A673 (cell line): ENCODE measurements at regions of chr5 and their contacts with region 1.

Region 1: DNA sequence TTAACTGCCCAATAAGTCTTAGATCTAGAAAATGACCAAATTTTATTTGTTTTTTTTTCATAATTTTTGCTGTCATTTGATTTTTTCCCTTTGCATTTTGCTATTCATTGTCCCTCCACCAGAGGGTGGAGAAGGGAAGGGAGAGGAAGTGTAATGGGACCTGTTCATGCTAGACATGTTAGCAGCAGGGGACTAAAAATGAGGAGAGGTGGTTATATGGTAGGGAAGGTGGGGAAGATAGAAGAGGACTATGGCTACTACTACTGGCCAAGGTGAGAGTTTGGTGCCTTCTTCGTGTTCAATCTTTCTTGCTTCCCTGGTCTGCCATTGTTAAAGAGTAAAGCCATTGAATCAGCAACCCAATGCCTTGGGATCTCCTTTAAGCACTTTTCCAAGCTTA is 6.4 kb downstream of the GRIA1 start:
- DNase-seq: peak; percentile 33
- H3K4me3 ChIP-seq: no peak overlapping the region
- H3K27ac ChIP-seq: no peak overlapping the region
- H3K4me1 ChIP-seq: peaks cover 4% of the 10 kb centered on the region
- H3K27me3 ChIP-seq: no peaks in the 10 kb centered on the region
- CTCF ChIP-seq: peak; percentile 71

Region 2: GRCh38 chr5:152532714-152533113 is 964.1 kb before region 1 on chr5:
- CTCF ChIA-PET with region 1: no interaction called
- POLR2A ChIA-PET with region 1: no interaction called
- intact Hi-C with region 1: loop called (anchors 10 kb)
- DNase-seq: peak; percentile 62
- H3K4me3 ChIP-seq: no peak overlapping the region
- H3K27ac ChIP-seq: no peak overlapping the region
- H3K4me1 ChIP-seq: no peaks in the 10 kb centered on the region
- H3K27me3 ChIP-seq: no peaks in the 10 kb centered on the region
- CTCF ChIP-seq: peak; percentile 61

Region 3: GRCh38 chr5:153079378-153079777 is 417.5 kb before region 1 on chr5:
- CTCF ChIA-PET with region 1: no interaction called
- POLR2A ChIA-PET with region 1: no interaction called
- intact Hi-C with region 1: no loop called
- DNase-seq: no peak
- H3K4me3 ChIP-seq: no peak overlapping the region
- H3K27ac ChIP-seq: no peak overlapping the region
- H3K4me1 ChIP-seq: no peaks in the 10 kb centered on the region
- H3K27me3 ChIP-seq: no peaks in the 10 kb centered on the region
- CTCF ChIP-seq: no peak

Region 4: GRCh38 chr5:153168241-153168640 is 328.6 kb before region 1 on chr5:
- CTCF ChIA-PET with region 1: no interaction called
- POLR2A ChIA-PET with region 1: no interaction called
- intact Hi-C with region 1: no loop called
- DNase-seq: no peak
- H3K4me3 ChIP-seq: no peak overlapping the region
- H3K27ac ChIP-seq: no peak overlapping the region
- H3K4me1 ChIP-seq: no peaks in the 10 kb centered on the region
- H3K27me3 ChIP-seq: no peaks in the 10 kb centered on the region
- CTCF ChIP-seq: no peak

Region 5: DNA sequence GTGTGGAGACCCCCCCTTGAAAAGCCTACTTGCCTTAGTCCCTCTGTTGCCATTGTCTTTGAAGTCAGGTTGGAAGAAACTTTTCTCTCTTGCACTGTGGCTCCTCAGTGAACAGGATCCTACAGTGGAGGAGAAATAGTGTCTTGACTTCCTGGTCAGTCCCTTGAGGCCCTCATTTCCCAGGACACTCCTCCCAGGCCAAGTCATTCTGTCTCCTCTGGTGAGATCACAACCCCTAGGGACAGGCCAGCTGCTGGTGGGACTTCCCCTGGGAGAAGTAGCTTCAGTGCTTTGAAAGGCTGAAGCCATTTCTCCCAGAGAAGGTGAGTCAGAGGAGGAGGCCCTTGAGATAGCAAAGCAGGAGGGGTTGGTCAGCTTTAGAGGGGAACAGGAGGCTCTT is 16.4 kb before region 1 on chr5:
- CTCF ChIA-PET with region 1: no interaction called
- POLR2A ChIA-PET with region 1: no interaction called
- intact Hi-C with region 1: no loop called
- DNase-seq: no peak
- H3K4me3 ChIP-seq: no peak overlapping the region
- H3K27ac ChIP-seq: no peak overlapping the region
- H3K4me1 ChIP-seq: no peaks in the 10 kb centered on the region
- H3K27me3 ChIP-seq: no peaks in the 10 kb centered on the region
- CTCF ChIP-seq: no peak

Region 6: GRCh38 chr5:153711755-153712154 is 214.9 kb after region 1 on chr5:
- CTCF ChIA-PET with region 1: no interaction called
- POLR2A ChIA-PET with region 1: no interaction called
- intact Hi-C with region 1: loop called (anchors 1 kb)
- DNase-seq: peak; percentile 7
- H3K4me3 ChIP-seq: no peak overlapping the region
- H3K27ac ChIP-seq: no peak overlapping the region
- H3K4me1 ChIP-seq: no peaks in the 10 kb centered on the region
- H3K27me3 ChIP-seq: peaks cover 3% of the 10 kb centered on the region
- CTCF ChIP-seq: peak; percentile 39

Region 7: DNA sequence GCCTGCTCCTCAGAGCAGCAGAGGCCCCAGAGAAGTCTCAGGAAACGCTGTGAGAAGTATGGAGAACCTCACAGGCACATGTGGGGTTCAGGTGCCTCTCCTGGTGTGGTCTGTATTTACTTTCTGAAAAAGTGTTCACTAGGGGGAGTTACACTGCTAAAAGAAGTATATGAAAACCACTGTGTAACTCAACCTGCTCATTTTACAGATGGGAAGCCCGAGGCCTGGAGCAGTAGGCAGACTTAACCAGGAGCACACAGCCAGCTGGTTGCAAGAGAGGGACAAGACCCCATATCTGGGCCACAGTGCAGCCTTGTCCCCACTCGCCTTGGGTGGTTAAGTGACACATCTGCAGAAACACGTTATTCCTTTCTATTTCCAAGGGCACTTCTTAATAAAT is 836.2 kb after region 1 on chr5:
- CTCF ChIA-PET with region 1: no interaction called
- POLR2A ChIA-PET with region 1: no interaction called
- intact Hi-C with region 1: no loop called
- DNase-seq: no peak
- H3K4me3 ChIP-seq: no peak overlapping the region
- H3K27ac ChIP-seq: no peak overlapping the region
- H3K4me1 ChIP-seq: no peaks in the 10 kb centered on the region
- H3K27me3 ChIP-seq: no peaks in the 10 kb centered on the region
- CTCF ChIP-seq: no peak